Activated T-helper 2 cell treated with anti-CD3 and anti-CD28 coated beads, Interferon-gamma antibody, Interleukin-2, Interleukin-4, amounts not matched to agents 10 μg/mL and 5 μg/mL and 100 μg/mL, durations not matched to agents 14 hours and 24 hours and 36 hours (primary cell): ENCODE measurements at regions of chr19 and their contacts with region 1.

Region 1: GRCh38 chr19:16160943-16161560 is 12.3 kb downstream of the CIB3 start:
- DNase-seq: no peak
- H3K4me3 Mint-ChIP-seq: peak overlapping the region; percentile 22
- H3K27ac Mint-ChIP-seq: peak overlapping the region; percentile 80
- H3K4me1 Mint-ChIP-seq: peaks cover 18% of the 10 kb centered on the region
- H3K27me3 Mint-ChIP-seq: no peaks in the 10 kb centered on the region

Region 2: DNA sequence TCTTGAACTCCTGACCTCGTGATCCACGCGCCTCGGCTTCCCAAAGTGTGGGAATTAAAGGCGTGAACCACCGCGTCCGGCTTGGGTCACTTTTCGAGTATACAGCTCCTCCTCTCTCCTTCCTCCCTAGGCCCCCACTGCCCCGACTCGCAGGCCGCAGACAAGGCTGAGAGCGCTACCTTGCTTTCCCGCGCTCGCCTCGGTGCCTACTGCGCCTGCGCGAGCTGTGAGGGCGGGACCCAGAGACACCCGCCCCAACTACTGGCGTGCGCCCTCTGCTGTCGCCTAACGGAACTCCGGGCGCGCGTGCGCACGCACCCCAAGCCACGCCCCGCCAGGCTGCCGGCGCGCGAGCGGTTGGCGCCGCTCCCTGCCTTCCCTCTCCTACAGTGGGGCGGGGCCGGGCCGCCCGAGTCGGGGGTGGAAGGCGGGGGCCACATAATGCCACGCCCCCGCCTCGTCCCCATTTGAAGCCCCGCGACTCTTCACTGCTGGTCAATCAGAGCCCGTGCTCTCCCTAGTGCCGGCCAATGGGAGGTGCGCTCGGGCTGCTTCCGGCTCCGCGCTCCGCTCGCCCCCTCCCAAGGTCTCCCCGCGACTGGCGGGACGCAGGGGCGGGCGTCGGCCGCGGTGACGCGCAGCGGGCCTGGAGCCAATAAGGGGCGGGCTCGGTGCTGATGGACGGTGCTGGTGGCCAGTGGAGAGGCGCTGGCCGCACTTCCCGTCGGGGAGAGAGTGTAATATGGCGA is 49.7 kb before region 1 on chr19 and contains the start of gene RAB8A:
- intact Hi-C with region 1: loop called (anchors 2 kb)
- DNase-seq: peak; percentile 99
- H3K4me3 Mint-ChIP-seq: peak within 1 kb of the TSS; percentile 99
- H3K27ac Mint-ChIP-seq: peak within 1 kb of the TSS; percentile 95
- H3K4me1 Mint-ChIP-seq: peaks cover 29% of the 10 kb centered on the region
- H3K27me3 Mint-ChIP-seq: no peaks in the 10 kb centered on the region
- total RNA-seq, gene RAB8A: 256 and 261 TPM in 2 replicates

Region 3: GRCh38 chr19:16118489-16119033 is 42.5 kb before region 1 on chr19:
- intact Hi-C with region 1: loop called (anchors 1 kb)
- DNase-seq: peak; percentile 45
- H3K4me3 Mint-ChIP-seq: peak overlapping the region; percentile 72
- H3K27ac Mint-ChIP-seq: peak overlapping the region; percentile 95
- H3K4me1 Mint-ChIP-seq: peaks cover 54% of the 10 kb centered on the region
- H3K27me3 Mint-ChIP-seq: no peaks in the 10 kb centered on the region

Region 4: GRCh38 chr19:16143399-16144245 is 17.4 kb before region 1 on chr19 and contains the start of gene HSH2D:
- intact Hi-C with region 1: loop called (anchors 2 kb)
- DNase-seq: peak; percentile 79
- H3K4me3 Mint-ChIP-seq: peak within 1 kb of the TSS; percentile 99
- H3K27ac Mint-ChIP-seq: peak within 1 kb of the TSS; percentile 96
- H3K4me1 Mint-ChIP-seq: peaks cover 40% of the 10 kb centered on the region
- H3K27me3 Mint-ChIP-seq: no peaks in the 10 kb centered on the region
- total RNA-seq, gene HSH2D: 42.3 and 43.5 TPM in 2 replicates